ENCODE measurements at regions of chr1 and their contacts with region 1.

Region 1: GRCh38 chr1:58783993-58784757 is at the start of gene JUN:
- DNase-seq: peak; percentile 100
- H3K4me3 ChIP-seq: peak within 1 kb of the TSS; percentile 83 to 88
- H3K27ac ChIP-seq: peak within 1 kb of the TSS; percentile 100
- H3K4me1 ChIP-seq: peaks cover 0 to 33% (median 19%) of the 10 kb centered on the region in 4 donors
- H3K27me3 ChIP-seq: no peaks in the 10 kb centered on the region
- CTCF ChIP-seq: no peak

Region 2: DNA sequence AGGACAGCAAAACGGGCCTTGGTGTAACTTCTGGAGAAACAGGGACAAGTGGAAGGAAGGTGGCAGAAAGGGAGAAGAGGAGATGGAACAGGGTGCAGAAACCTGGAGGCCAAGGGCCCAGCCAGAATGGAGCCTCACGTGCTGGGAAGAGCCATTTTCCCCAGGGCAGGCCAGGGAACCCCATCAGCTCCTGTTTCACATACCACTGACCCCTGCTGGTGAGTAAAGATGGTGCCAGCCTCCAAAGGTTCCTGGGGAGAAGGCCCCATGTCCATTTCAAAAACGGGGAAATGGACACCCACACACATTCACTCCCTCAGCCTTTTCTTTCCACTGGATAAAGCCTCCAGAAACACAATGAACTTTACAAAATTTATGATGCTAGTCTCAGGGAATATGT is 57.3 kb after region 1 on chr1:
- intact Hi-C with region 1: no loop called
- DNase-seq: no peak
- H3K4me3 ChIP-seq: no peak overlapping the region
- H3K27ac ChIP-seq: no peak overlapping the region
- H3K4me1 ChIP-seq: no peaks in the 10 kb centered on the region
- H3K27me3 ChIP-seq: no peaks in the 10 kb centered on the region
- CTCF ChIP-seq: peak in 1 of 2 experiments; percentile 5

Region 3: GRCh38 chr1:58903514-58904298 is 119.5 kb after region 1 on chr1:
- intact Hi-C with region 1: loop called (anchors 2 kb)
- DNase-seq: peak; percentile 97 to 99
- H3K4me3 ChIP-seq: peak overlapping the region; percentile 56 to 71
- H3K27ac ChIP-seq: peak overlapping the region; percentile 93 to 97
- H3K4me1 ChIP-seq: peaks cover 0 to 24% (median 9%) of the 10 kb centered on the region in 4 donors
- H3K27me3 ChIP-seq: no peaks in the 10 kb centered on the region
- CTCF ChIP-seq: peak in 1 of 2 experiments; percentile 18

Region 4: DNA sequence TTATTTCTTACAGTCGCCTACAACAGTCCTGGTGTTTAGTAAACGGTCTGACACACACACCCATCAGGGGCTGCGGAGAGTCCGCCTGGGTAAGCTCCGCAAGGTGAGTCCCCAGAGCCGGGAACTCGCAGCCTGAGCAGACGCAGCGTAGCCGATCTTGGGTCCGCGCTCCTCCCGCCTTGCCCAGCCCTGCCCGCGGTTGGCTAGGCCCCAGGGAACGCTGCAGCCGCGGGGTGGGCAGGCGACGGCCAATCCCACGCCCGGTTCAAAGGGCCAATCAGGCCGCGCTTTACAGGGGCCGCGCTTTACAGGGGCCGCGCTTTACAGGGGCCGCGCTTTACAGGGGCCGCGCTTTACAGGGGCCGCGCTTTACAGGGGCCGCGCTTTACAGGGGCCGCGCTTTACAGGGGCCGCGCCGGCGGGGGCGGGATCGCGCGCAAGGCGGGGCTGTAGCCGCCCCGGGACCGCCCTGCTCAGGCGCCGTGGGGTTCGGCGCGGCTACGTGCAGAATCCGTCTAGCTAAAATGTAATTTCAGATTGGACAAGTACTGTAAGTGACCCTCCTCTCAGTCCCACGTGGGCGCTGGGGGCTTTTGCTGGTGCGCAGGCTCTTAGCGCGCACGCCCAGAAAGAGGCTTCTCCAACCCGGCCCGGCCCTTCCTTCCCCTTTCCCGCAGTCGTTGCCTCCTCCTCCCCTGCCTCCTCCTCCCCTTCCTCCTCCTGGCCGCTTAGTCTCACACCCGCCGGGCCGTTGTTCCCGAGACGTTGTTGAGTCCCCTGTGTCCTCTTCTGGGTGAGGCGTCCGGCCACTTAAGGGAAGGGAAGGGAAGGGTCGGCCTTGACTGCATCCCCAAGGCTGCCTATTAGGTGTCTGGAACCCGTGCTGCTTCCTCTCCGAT is 512.4 kb after region 1 on chr1 and contains the start of gene FGGY:
- intact Hi-C with region 1: loop called (anchors 5 kb)
- DNase-seq: peak; percentile 99
- H3K4me3 ChIP-seq: peak within 1 kb of the TSS; percentile 53 to 59
- H3K27ac ChIP-seq: peak within 1 kb of the TSS; percentile 94 to 95
- H3K4me1 ChIP-seq: peaks cover 0 to 26% (median 19%) of the 10 kb centered on the region in 4 donors
- H3K27me3 ChIP-seq: no peaks in the 10 kb centered on the region
- CTCF ChIP-seq: no peak

Measured in tibial artery (tissue), 4 donors.